Posterior cingulate gyrus (tissue), 11 donors: ENCODE measurements at regions of chr12 and their contacts with region 1.

Region 1: GRCh38 chr12:95217377-95218149 is at the starts of genes FGD6 and VEZT:
- DNase-seq: peak; percentile 97 to 100 (median 98)

Region 2: DNA sequence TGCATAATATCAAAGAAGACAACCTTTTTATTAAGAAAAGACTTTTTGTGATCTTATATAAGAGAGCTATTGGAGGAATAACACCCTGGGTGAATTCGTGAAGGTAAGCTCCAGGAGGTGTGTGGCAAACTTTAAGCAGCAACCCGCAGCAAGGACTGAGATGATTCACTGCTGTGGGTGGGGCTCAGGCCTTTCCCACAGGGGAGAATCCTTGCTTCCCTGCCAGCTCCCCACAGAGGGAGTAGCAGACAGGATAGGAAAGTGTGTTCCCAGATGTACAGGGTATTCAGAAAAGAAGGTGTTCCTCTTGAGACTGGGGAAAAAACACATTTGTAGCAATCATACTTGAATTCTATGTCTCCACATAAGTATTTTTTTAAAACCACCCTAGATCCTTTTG is 223.3 kb before region 1 on chr12:
- intact Hi-C with region 1: no loop called
- DNase-seq: no peak

Region 3: GRCh38 chr12:95072900-95073697 is 144.5 kb before region 1 on chr12 and contains the start of gene NR2C1:
- intact Hi-C with region 1: loop called (anchors 1 kb)
- DNase-seq: peak; percentile 88 to 99 (median 91)

Region 4: GRCh38 chr12:95117178-95117599 is 100.4 kb before region 1 on chr12:
- intact Hi-C with region 1: loop called (anchors 1 kb)
- DNase-seq: peak in 5 of 10 donors; percentile 26 to 52 (median 32)

Region 5: DNA sequence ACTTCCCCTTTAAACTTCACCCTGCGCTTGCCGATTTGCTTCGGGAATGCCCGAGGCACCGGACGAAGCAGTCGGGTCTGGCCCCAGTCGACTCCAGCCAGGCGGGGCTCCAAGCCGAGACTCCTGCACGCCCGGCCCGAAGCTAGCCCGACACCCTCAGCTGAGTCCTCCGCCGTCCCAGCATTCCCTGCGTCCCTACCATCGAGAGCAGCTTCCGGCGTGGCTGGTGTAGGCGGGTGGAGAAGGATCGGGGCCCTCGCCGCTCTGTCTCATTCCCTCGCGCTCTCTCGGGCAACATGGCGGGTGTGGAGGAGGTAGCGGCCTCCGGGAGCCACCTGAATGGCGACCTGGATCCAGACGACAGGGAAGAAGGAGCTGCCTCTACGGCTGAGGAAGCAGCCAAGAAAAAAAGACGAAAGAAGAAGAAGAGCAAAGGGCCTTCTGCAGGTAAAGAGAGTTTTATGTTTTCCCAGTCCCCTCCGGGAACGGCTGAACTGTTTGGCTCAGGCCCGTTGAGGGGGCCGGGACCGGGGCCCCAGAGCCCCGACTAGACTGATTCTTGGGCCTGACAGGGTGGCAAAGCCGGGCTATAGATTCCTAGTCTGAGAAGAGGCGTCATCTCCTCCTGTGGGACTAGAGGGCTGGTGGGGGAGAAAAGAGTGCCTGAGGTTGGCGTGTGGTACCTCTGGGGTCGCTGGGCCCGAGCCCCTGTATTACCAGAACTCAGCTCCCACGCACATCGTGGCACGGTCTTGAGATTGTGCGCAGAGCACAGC is 256.5 kb after region 1 on chr12 and contains the start of gene METAP2:
- intact Hi-C with region 1: loop called (anchors 2 kb)
- DNase-seq: peak; percentile 94 to 99 (median 97)